ENCODE measurements at regions of chr16 and their contacts with region 1.

Region 1: DNA sequence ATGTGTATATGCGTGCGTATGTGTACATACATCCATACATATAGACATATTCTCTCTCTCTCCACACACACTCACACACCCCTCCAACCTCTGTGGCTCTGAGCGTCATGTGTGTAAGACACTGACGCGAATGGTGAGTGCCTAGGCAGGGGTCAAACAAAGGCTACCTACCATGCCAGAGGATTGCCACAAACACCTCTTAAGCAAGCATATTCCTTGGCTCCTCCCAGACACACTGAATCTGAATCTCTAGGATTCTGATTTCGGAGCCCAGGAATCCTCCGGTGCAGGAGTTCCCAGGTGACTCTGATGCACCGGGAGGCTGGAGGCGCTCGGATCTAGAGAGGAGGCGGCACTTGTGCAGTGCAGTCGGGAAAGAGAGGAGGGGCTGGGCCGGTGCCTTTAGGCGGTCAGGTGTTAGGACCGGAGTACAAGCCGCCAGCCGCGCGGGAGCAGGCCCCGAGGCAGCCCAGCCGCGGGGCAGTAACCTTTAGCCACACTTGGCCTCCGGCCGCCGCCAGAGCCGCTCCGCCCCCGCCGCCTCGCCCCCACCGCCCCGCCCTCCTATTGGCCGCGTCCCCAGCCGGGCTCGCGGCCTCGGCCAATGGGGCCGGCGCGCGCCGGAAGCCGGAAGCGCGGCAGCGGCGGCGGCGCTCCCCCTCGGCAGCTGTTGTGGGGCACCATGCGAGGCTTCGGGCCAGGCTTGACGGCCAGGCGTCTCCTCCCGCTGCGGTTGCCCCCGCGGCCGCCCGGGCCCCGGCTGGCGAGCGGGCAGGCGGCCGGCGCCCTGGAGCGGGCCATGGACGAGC is at the start of gene MLYCD:
- DNase-seq: peak; percentile 82
- ATAC-seq: peak; percentile 96
- H3K4me3 ChIP-seq: peak within 1 kb of the TSS; percentile 60 to 79 (median 69)
- H3K4me3 Mint-ChIP-seq: peak within 1 kb of the TSS; percentile 91
- H3K27ac ChIP-seq: peak within 1 kb of the TSS; percentile 41 to 58
- H3K27ac Mint-ChIP-seq: peak within 1 kb of the TSS; percentile 72
- H3K4me1 ChIP-seq: peaks cover 19 to 20% of the 10 kb centered on the region in 2 donors
- H3K4me1 Mint-ChIP-seq: peaks cover 30% of the 10 kb centered on the region
- H3K27me3 ChIP-seq: no peaks in the 10 kb centered on the region
- H3K27me3 Mint-ChIP-seq: peaks cover 13% of the 10 kb centered on the region
- CTCF ChIP-seq: no peak
- total RNA-seq, gene MLYCD: 16.8 and 17.1 TPM in 2 replicates

Region 2: GRCh38 chr16:83494459-83494858 is 404.2 kb before region 1 on chr16:
- CTCF ChIA-PET with region 1: no interaction called
- POLR2A ChIA-PET with region 1: no interaction called
- intact Hi-C with region 1: no loop called
- DNase-seq: no peak
- ATAC-seq: no peak
- H3K4me3 ChIP-seq: no peak overlapping the region
- H3K4me3 Mint-ChIP-seq: no peak overlapping the region
- H3K27ac ChIP-seq: no peak overlapping the region
- H3K27ac Mint-ChIP-seq: no peak overlapping the region
- H3K4me1 ChIP-seq: no peaks in the 10 kb centered on the region
- H3K4me1 Mint-ChIP-seq: no peaks in the 10 kb centered on the region
- H3K27me3 ChIP-seq: no peaks in the 10 kb centered on the region
- H3K27me3 Mint-ChIP-seq: peaks cover 14% of the 10 kb centered on the region
- CTCF ChIP-seq: no peak

Region 3: GRCh38 chr16:83842756-83843507 is 55.7 kb before region 1 on chr16:
- CTCF ChIA-PET with region 1: interaction called, 3 read pairs
- POLR2A ChIA-PET with region 1: interaction called, 7 read pairs
- intact Hi-C with region 1: loop called (anchors 1 kb)
- DNase-seq: peak; percentile 79
- ATAC-seq: peak; percentile 89
- H3K4me3 ChIP-seq: peak overlapping the region in 3 of 5 experiments; percentile 15 to 47 (median 21)
- H3K4me3 Mint-ChIP-seq: peak overlapping the region; percentile 71
- H3K27ac ChIP-seq: peak overlapping the region; percentile 63 to 65
- H3K27ac Mint-ChIP-seq: peak overlapping the region; percentile 90
- H3K4me1 ChIP-seq: peaks cover 42 to 48% of the 10 kb centered on the region in 2 donors
- H3K4me1 Mint-ChIP-seq: peaks cover 47% of the 10 kb centered on the region
- H3K27me3 ChIP-seq: no peaks in the 10 kb centered on the region
- H3K27me3 Mint-ChIP-seq: peaks cover 3% of the 10 kb centered on the region
- CTCF ChIP-seq: no peak

Region 4: DNA sequence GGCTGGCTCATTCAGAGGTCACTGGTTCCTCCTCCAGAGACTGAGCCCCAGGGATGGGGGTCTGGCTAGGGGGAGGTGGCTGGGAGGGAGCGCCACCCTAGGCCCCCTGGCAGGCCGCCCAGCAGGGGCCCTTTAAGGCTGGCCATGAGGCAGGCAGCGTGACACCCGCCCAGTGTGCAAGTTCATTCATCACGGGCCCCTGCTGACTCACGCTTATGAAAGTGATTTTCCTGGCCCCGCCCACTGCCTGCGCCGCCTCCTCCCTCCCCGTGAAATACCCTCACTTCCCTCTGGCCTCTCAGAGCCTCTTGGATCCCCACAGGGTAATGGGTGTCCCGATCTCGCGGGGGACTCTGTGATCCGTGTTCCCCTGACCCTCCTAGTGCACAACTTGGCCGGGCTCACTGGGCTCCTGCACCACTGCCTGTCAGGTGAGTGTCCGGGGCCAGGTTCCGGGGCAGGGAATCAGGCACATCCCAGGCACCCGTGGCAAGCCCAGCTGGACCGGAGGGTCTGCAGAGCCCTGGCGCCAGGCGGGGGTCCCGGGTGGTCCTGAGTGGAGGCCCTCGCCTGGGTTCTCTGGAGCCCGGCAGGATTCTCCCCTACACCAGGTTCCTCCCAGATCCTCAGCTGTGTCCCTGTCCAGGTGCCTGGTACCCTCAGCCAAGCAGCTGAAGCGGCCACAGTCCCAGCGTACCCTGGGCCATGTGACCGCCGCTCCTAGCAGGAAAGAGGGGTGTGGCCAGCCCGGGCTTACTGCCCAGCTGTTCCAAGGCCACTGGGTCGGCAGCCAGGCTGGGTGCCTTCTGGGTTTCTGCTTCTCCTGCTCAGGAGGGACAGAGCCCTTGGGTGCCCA is 54.5 kb after region 1 on chr16 and contains the start of gene OSGIN1:
- CTCF ChIA-PET with region 1: no interaction called
- POLR2A ChIA-PET with region 1: no interaction called
- intact Hi-C with region 1: loop called (anchors 1 kb)
- DNase-seq: peak; percentile 52
- ATAC-seq: peak; percentile 81
- H3K4me3 ChIP-seq: peak within 1 kb of the TSS in 2 of 5 experiments; percentile 19 to 35
- H3K4me3 Mint-ChIP-seq: peak within 1 kb of the TSS; percentile 76
- H3K27ac ChIP-seq: no peak within 1 kb of the TSS
- H3K27ac Mint-ChIP-seq: no peak within 1 kb of the TSS
- H3K4me1 ChIP-seq: peaks cover 12 to 13% of the 10 kb centered on the region in 2 donors
- H3K4me1 Mint-ChIP-seq: peaks cover 12% of the 10 kb centered on the region
- H3K27me3 ChIP-seq: peaks cover 0 to 44% (median 10%) of the 10 kb centered on the region in 4 experiments
- H3K27me3 Mint-ChIP-seq: peaks cover 17% of the 10 kb centered on the region
- CTCF ChIP-seq: no peak
- total RNA-seq, gene OSGIN1: 1.2 and 1.8 TPM in 2 replicates

Region 5: GRCh38 chr16:84144859-84145639 is 246.4 kb after region 1 on chr16 and contains the starts of genes DNAAF1 and HSDL1:
- CTCF ChIA-PET with region 1: no interaction called
- POLR2A ChIA-PET with region 1: no interaction called
- intact Hi-C with region 1: loop called (anchors 1 kb)
- DNase-seq: peak; percentile 96
- ATAC-seq: peak; percentile 88
- H3K4me3 ChIP-seq: peak within 1 kb of the TSS; percentile 46 to 80 (median 75)
- H3K4me3 Mint-ChIP-seq: peak within 1 kb of the TSS; percentile 96
- H3K27ac ChIP-seq: peak within 1 kb of the TSS; percentile 34 to 86
- H3K27ac Mint-ChIP-seq: peak within 1 kb of the TSS; percentile 91
- H3K4me1 ChIP-seq: peaks cover 3 to 14% of the 10 kb centered on the region in 2 donors
- H3K4me1 Mint-ChIP-seq: peaks cover 14% of the 10 kb centered on the region
- H3K27me3 ChIP-seq: peaks cover 0 to 2% (median 0%) of the 10 kb centered on the region in 4 experiments
- H3K27me3 Mint-ChIP-seq: peaks cover 16% of the 10 kb centered on the region
- CTCF ChIP-seq: no peak
- total RNA-seq, gene DNAAF1: 0.29 and 0.30 TPM in 2 replicates
- total RNA-seq, gene HSDL1: 30.8 and 40.2 TPM in 2 replicates

Region 6: GRCh38 chr16:84186685-84187437 is 288.2 kb after region 1 on chr16 and contains the start of gene TAF1C:
- CTCF ChIA-PET with region 1: no interaction called
- POLR2A ChIA-PET with region 1: no interaction called
- intact Hi-C with region 1: loop called (anchors 2 kb)
- DNase-seq: peak; percentile 96
- ATAC-seq: peak; percentile 99
- H3K4me3 ChIP-seq: peak within 1 kb of the TSS; percentile 70 to 98 (median 88)
- H3K4me3 Mint-ChIP-seq: peak within 1 kb of the TSS; percentile 96
- H3K27ac ChIP-seq: peak within 1 kb of the TSS; percentile 26 to 83
- H3K27ac Mint-ChIP-seq: peak within 1 kb of the TSS; percentile 88
- H3K4me1 ChIP-seq: peaks cover 7 to 10% of the 10 kb centered on the region in 2 donors
- H3K4me1 Mint-ChIP-seq: peaks cover 22% of the 10 kb centered on the region
- H3K27me3 ChIP-seq: no peaks in the 10 kb centered on the region
- H3K27me3 Mint-ChIP-seq: no peaks in the 10 kb centered on the region
- CTCF ChIP-seq: peak; percentile 88
- total RNA-seq, gene TAF1C: 110 and 115 TPM in 2 replicates

Region 7: GRCh38 chr16:85114909-85115567 is 1216.4 kb after region 1 on chr16:
- CTCF ChIA-PET with region 1: no interaction called
- POLR2A ChIA-PET with region 1: no interaction called
- intact Hi-C with region 1: loop called (anchors 5 kb)
- DNase-seq: peak; percentile 76
- ATAC-seq: peak; percentile 88
- H3K4me3 ChIP-seq: peak overlapping the region in 4 of 5 experiments; percentile 25 to 49 (median 38)
- H3K4me3 Mint-ChIP-seq: peak overlapping the region; percentile 84
- H3K27ac ChIP-seq: no peak overlapping the region
- H3K27ac Mint-ChIP-seq: peak overlapping the region; percentile 72
- H3K4me1 ChIP-seq: peaks cover 0 to 8% of the 10 kb centered on the region in 2 donors
- H3K4me1 Mint-ChIP-seq: peaks cover 8% of the 10 kb centered on the region
- H3K27me3 ChIP-seq: no peaks in the 10 kb centered on the region
- H3K27me3 Mint-ChIP-seq: no peaks in the 10 kb centered on the region
- CTCF ChIP-seq: peak; percentile 92